Gastrocnemius medialis (tissue), 4 donors: ENCODE measurements at regions of chr2 and their contacts with region 1.

Region 1: GRCh38 chr2:76444732-76445131 is 734.0 kb upstream of the GCFC2 start:
- DNase-seq: no peak
- ATAC-seq: no peak
- H3K4me3 ChIP-seq: no peak overlapping the region
- H3K27ac ChIP-seq: no peak overlapping the region
- H3K4me1 ChIP-seq: no peaks in the 10 kb centered on the region
- H3K27me3 ChIP-seq: no peaks in the 10 kb centered on the region
- CTCF ChIP-seq: no peak
- POLR2A ChIP-seq: no peak

Region 2: DNA sequence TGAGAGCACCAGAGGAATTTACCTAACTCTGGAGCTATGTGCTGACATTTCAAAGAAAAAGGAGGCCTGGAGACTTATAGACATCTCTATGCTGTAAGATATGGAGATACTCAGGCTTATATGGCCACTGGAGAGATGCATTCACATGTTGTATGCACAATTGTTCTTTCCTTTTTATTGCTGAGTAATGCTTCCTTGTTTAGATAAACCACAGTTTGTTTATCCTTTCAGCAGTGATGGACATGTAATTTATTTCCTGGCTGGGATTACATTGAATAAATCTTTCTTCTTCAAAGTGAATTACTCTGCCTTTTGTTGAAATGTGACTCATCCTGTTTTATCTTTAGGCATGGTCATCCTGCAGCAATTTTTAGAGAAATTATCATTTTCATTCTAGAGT is 17.3 kb before region 1 on chr2:
- in situ Hi-C with region 1: no loop called
- intact Hi-C with region 1: loop called (anchors 1 kb)
- DNase-seq: no peak
- ATAC-seq: no peak
- H3K4me3 ChIP-seq: no peak overlapping the region
- H3K27ac ChIP-seq: no peak overlapping the region
- H3K4me1 ChIP-seq: no peaks in the 10 kb centered on the region
- H3K27me3 ChIP-seq: no peaks in the 10 kb centered on the region
- CTCF ChIP-seq: no peak
- POLR2A ChIP-seq: no peak